ENCODE measurements at regions of chr9 and their contacts with region 1.

Region 1: GRCh38 chr9:75200892-75201470 is 112.7 kb downstream of the OSTF1 start:
- DNase-seq: peak; percentile 49
- ATAC-seq: 0 out of 2 replicates have a peak, but pooled peaks have one; percentile 21
- H3K4me3 ChIP-seq: no peak overlapping the region
- H3K27ac ChIP-seq: no peak overlapping the region
- H3K4me1 ChIP-seq: no peaks in the 10 kb centered on the region
- H3K27me3 ChIP-seq: no peaks in the 10 kb centered on the region; the same call in 1 of the 2 replicates
- CTCF ChIP-seq: peak; percentile 65
- POLR2A ChIP-seq: no peak
- RAD21 ChIP-seq: peak; percentile 45

Region 2: GRCh38 chr9:75185585-75186170 is 15.3 kb before region 1 on chr9:
- CTCF ChIA-PET with region 1: interaction called, 3 read pairs
- POLR2A ChIA-PET with region 1: no interaction called
- dilution Hi-C with region 1: no loop called
- in situ Hi-C with region 1: no loop called
- intact Hi-C with region 1: loop called (anchors 1 kb)
- DNase-seq: no peak
- ATAC-seq: peak; percentile 49; the same call in 1 of the 2 replicates
- H3K4me3 ChIP-seq: no peak overlapping the region
- H3K27ac ChIP-seq: no peak overlapping the region
- H3K4me1 ChIP-seq: no peaks in the 10 kb centered on the region
- H3K27me3 ChIP-seq: no peaks in the 10 kb centered on the region; the same call in 1 of the 2 replicates
- CTCF ChIP-seq: peak; percentile 30; the same call in 1 of the 2 replicates
- POLR2A ChIP-seq: no peak
- RAD21 ChIP-seq: no peak

Region 3: DNA sequence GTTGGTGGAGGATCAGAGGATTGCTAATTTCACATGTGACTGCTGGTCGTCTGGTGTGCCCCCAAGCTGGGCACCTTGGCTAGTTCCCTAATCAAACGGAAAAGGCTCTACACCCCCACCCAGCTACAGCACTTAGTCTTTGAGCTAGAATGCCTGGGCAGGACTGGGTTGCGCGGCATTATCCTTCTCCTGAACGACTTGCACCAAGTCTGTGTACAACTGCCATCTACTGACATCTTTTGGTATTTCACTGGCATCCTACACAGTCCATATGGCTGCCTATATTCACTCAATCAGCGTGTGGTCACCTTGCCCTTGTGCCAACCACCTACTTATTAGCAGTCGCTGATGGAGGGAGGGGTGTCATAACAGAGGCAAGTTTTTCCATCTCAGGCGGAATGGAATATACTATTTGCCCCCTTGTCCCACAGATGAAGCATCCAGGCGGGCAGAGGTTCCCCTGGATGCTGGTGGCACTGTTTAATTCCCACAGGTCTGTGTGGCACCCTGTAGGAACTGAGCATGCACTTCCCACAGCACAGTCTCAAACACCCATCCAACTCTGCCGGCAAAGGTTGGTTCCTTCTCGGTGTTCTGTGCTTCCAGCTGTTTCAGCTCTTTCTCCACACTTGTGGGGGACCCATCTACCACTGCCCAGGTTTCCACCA is 37.5 kb after region 1 on chr9:
- CTCF ChIA-PET with region 1: interaction called, 3 read pairs
- POLR2A ChIA-PET with region 1: no interaction called
- dilution Hi-C with region 1: no loop called
- in situ Hi-C with region 1: no loop called
- intact Hi-C with region 1: loop called (anchors 1 kb)
- DNase-seq: peak; percentile 68
- ATAC-seq: peak; percentile 99
- H3K4me3 ChIP-seq: no peak overlapping the region
- H3K27ac ChIP-seq: no peak overlapping the region
- H3K4me1 ChIP-seq: no peaks in the 10 kb centered on the region
- H3K27me3 ChIP-seq: no peaks in the 10 kb centered on the region
- CTCF ChIP-seq: peak; percentile 57
- POLR2A ChIP-seq: no peak
- RAD21 ChIP-seq: peak; percentile 51

Measured in IMR-90 (cell line).